PC-9 (cell line): ENCODE measurements at regions of chr17 and their contacts with region 1.

Region 1: GRCh38 chr17:6627019-6627418 is 13.5 kb downstream of the KIAA0753 start:
- DNase-seq: no peak
- H3K4me3 ChIP-seq: no peak overlapping the region
- H3K27ac ChIP-seq: no peak overlapping the region
- H3K4me1 ChIP-seq: no peaks in the 10 kb centered on the region
- H3K27me3 ChIP-seq: no peaks in the 10 kb centered on the region
- CTCF ChIP-seq: no peak

Region 2: DNA sequence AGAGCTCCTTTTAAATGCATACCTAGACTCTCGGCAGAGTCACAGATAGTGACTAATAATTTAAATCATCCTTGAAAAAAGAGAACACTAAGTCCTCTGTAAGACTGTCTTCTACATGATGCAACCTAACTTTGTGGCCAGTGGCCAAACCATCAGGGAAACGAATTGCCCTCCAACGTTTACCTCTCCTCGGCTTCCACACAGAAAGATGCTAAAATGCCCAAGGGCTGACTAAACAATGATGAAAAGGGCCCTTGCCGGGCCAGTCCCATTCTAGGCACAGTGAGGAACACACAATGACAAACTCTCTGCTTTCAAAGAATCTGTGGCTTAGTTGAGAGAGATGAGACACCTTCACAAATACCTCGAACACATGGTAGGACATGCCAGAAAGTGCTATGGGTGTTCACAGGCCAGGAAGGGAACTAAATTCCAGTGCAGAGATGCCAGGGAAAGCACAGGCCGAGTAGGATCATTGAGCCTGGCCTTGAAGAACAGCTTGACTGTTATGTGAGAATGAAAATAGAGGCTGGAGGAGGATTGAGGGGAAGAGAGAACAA is 35.3 kb before region 1 on chr17:
- CTCF ChIA-PET with region 1: no interaction called
- POLR2A ChIA-PET with region 1: interaction called, 7 read pairs
- intact Hi-C with region 1: loop called (anchors 5 kb)
- DNase-seq: no peak
- H3K4me3 ChIP-seq: no peak overlapping the region
- H3K27ac ChIP-seq: no peak overlapping the region
- H3K4me1 ChIP-seq: no peaks in the 10 kb centered on the region
- H3K27me3 ChIP-seq: no peaks in the 10 kb centered on the region
- CTCF ChIP-seq: no peak